Activated CD4-positive, alpha-beta T cell treated with anti-CD3 and anti-CD28 coated beads for 36 hours (primary cell): ENCODE measurements at regions of chr17 and their contacts with region 1.

Region 1: DNA sequence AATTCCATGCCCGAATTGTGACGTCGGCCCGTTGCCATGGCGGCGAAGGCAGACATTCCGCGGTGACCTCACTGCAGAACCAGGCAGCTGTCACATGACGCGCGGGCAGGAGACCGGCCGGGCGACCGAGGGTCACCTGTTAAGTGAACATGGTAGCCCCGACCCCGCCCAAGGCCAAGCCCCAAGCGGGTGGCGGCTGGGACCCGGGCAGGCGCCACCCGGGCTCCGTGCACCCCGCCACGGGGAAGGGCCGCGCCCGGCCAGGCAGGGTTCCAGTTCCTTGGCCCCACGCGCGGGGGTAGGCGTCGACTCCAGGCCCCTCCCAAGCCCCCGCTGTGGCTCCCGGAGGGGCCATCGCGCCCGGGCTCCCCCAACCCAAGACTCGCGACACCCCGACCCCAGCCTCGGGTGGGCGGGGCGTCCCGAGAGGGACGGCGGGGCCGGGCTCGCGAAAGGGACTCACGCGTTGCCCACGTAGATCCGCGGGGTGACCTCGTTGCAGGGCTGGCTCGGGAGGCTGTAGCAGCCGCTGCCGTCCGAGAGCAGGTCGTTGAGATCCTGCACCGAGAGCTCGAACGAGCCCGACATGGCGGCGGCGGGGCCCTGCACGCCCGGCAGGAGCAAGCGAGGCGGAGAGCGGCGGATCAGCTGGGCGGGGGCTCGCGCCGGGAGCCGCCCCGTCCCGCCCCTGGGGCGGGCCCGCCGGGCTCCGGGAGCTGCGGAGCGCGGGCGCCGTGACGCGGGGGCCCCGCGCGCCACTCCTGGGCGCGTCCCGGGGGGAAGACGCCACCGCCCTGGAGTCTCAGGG is at the start of gene DUSP3:
- DNase-seq: peak; percentile 85
- ATAC-seq: peak; percentile 98
- H3K4me3 Mint-ChIP-seq: peak within 1 kb of the TSS; percentile 78
- H3K27ac Mint-ChIP-seq: peak within 1 kb of the TSS; percentile 70
- H3K4me1 Mint-ChIP-seq: peaks cover 7% of the 10 kb centered on the region
- H3K27me3 Mint-ChIP-seq: peaks cover 19% of the 10 kb centered on the region
- total RNA-seq, gene DUSP3: 23.4 to 24.8 TPM

Region 2: DNA sequence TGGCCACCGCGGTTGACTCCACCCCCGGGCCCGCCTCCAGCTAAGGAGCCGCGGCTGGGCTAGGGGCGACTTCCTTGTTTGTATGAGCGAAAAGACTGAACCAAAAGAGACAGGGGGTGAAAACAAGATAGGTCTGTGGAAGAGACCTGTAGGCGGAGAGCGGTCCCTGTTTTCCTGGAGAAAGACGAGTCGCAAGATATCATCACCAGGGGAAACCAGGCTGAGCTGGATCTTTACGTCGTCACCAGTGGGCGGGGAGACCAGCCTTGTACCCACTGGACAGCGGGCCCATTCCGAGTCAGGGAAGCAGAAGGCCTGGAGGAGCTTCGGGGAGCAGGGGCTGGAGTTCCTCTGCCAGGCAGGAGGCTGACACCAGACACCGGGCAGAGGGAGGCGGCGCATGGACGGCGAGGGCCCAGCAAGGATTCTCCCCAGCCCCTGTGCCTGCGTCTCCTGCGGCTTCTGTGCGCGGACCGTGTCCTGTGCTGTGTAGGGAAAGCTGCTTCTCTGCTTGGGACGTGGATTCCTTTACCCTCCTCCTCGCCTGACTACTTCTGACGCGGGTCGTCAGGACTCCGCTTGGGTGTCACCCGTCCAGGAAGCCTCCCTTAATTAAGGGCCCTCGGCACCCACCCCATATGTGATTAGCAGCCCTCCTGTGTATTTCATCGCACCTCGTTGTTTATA is 390.0 kb before region 1 on chr17:
- CTCF ChIA-PET with region 1: no interaction called
- POLR2A ChIA-PET with region 1: no interaction called
- intact Hi-C with region 1: loop called in 1 of 2 experiments (anchors 1 kb)
- DNase-seq: peak; percentile 95
- ATAC-seq: peak; percentile 82
- H3K4me3 Mint-ChIP-seq: peak overlapping the region; percentile 80
- H3K27ac Mint-ChIP-seq: peak overlapping the region; percentile 98
- H3K4me1 Mint-ChIP-seq: peaks cover 16% of the 10 kb centered on the region
- H3K27me3 Mint-ChIP-seq: no peaks in the 10 kb centered on the region

Region 3: DNA sequence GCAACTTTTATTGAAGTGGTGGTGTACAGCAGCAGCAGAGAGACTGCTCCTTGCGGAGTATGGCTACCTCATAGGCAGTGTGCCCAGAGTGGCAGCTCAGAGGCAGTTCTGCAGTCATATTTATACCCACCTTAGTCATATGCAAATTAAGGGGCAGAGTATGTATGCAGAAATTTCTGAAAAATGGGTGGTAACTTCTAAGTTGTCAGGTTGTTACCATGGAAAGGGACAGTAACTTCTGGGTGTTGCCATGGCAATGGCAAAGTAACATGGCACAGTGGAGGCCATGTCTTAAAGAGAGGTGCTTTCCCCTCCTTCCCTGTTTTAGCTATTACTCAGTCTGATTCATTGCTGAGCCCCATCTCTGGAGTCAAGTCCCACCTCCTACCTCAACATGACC is 170.2 kb before region 1 on chr17:
- CTCF ChIA-PET with region 1: no interaction called
- POLR2A ChIA-PET with region 1: no interaction called
- intact Hi-C with region 1: loop called in 1 of 2 experiments (anchors 1 kb)
- DNase-seq: peak; percentile 85
- ATAC-seq: peak; percentile 97
- H3K4me3 Mint-ChIP-seq: no peak overlapping the region
- H3K27ac Mint-ChIP-seq: peak overlapping the region; percentile 73
- H3K4me1 Mint-ChIP-seq: peaks cover 8% of the 10 kb centered on the region
- H3K27me3 Mint-ChIP-seq: no peaks in the 10 kb centered on the region

Region 4: GRCh38 chr17:43740541-43740940 is 38.0 kb before region 1 on chr17:
- CTCF ChIA-PET with region 1: no interaction called
- POLR2A ChIA-PET with region 1: no interaction called
- intact Hi-C with region 1: no loop called
- DNase-seq: no peak
- ATAC-seq: no peak
- H3K4me3 Mint-ChIP-seq: no peak overlapping the region
- H3K27ac Mint-ChIP-seq: no peak overlapping the region
- H3K4me1 Mint-ChIP-seq: no peaks in the 10 kb centered on the region
- H3K27me3 Mint-ChIP-seq: peaks cover 24% of the 10 kb centered on the region

Region 5: GRCh38 chr17:43766413-43767052 is 12.0 kb before region 1 on chr17:
- CTCF ChIA-PET with region 1: interaction called, 28 read pairs
- POLR2A ChIA-PET with region 1: no interaction called
- intact Hi-C with region 1: no loop called
- DNase-seq: peak; percentile 73
- ATAC-seq: no peak
- H3K4me3 Mint-ChIP-seq: no peak overlapping the region
- H3K27ac Mint-ChIP-seq: no peak overlapping the region
- H3K4me1 Mint-ChIP-seq: no peaks in the 10 kb centered on the region
- H3K27me3 Mint-ChIP-seq: no peaks in the 10 kb centered on the region

Region 6: GRCh38 chr17:43846221-43846712 is 67.7 kb after region 1 on chr17:
- CTCF ChIA-PET with region 1: interaction called, 3 read pairs
- POLR2A ChIA-PET with region 1: no interaction called
- intact Hi-C with region 1: loop called in 1 of 2 experiments (anchors 1 kb)
- DNase-seq: peak; percentile 89
- ATAC-seq: peak; percentile 99
- H3K4me3 Mint-ChIP-seq: no peak overlapping the region
- H3K27ac Mint-ChIP-seq: no peak overlapping the region
- H3K4me1 Mint-ChIP-seq: no peaks in the 10 kb centered on the region
- H3K27me3 Mint-ChIP-seq: peaks cover 19% of the 10 kb centered on the region

Region 7: GRCh38 chr17:44070455-44071197 is 292.1 kb after region 1 on chr17 and contains the start of gene G6PC3:
- CTCF ChIA-PET with region 1: no interaction called
- POLR2A ChIA-PET with region 1: no interaction called
- intact Hi-C with region 1: loop called in 1 of 2 experiments (anchors 5 kb)
- DNase-seq: peak; percentile 93
- ATAC-seq: peak; percentile 68
- H3K4me3 Mint-ChIP-seq: peak within 1 kb of the TSS; percentile 93
- H3K27ac Mint-ChIP-seq: peak within 1 kb of the TSS; percentile 98
- H3K4me1 Mint-ChIP-seq: peaks cover 30% of the 10 kb centered on the region
- H3K27me3 Mint-ChIP-seq: no peaks in the 10 kb centered on the region
- total RNA-seq, gene G6PC3: 21.3 to 22.0 TPM